Right ventricle myocardium inferior (tissue), 1 donor: ENCODE measurements at regions of chr3 and their contacts with region 1.

Region 1: GRCh38 chr3:187738331-187739093 is 6.8 kb downstream of the BCL6 start:
- DNase-seq: peak; percentile 82
- ATAC-seq: peak; percentile 71

Region 2: GRCh38 chr3:188154014-188154808 is 415.7 kb after region 1 on chr3 and contains the start of gene LPP:
- intact Hi-C with region 1: loop called (anchors 2 kb)
- DNase-seq: peak; percentile 93
- ATAC-seq: peak; percentile 93
- total RNA-seq, gene LPP: 114 TPM

Region 3: GRCh38 chr3:188397766-188398705 is 659.5 kb after region 1 on chr3:
- intact Hi-C with region 1: loop called (anchors 5 kb)
- DNase-seq: peak; percentile 60
- ATAC-seq: peak; percentile 49

Region 4: DNA sequence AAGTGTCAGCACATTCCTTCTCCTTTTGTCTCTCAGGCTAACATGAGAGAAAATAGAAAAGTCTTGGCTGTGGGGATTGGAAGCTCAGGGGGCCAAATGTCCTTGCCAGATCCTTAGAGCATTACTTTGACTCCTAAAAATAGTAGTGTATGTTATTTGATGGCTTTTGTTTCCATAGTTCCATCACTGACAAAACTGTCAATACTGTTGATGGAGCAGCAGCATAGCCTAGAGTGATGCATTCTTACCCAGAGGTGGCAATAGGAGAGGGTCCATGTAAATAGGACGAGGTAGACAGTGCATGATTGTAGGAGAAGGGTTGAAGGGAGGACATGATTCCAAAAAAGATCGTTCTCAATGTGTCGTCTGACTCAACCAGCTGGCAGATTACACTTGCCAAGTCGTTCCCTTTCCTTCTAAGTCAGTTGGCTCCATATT is 1150.6 kb after region 1 on chr3:
- intact Hi-C with region 1: loop called (anchors 2 kb)
- DNase-seq: no peak
- ATAC-seq: peak; percentile 83

Region 5: DNA sequence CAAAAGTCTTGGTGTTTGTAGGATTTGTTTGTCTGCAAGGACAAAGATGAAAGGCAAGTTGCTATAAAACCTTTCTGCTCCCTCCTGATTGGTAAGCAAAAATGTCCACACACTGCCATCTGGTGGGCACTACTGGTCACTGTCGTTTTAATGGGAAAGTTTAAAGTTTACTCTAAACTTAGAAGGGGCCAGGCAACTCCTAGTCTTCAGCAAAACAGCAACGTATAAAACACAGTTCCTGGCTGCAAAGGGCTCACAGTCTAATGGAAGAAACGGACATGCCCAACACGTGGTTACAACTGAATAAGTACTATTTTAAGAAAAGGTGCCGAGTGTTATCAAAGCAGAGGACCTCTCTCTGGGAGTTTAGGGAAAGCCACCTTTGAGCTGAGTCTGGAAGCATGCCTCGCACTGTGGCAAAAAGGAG is 1409.6 kb after region 1 on chr3:
- intact Hi-C with region 1: loop called (anchors 2 kb)
- DNase-seq: no peak
- ATAC-seq: peak; percentile 69